ENCODE measurements at regions of chr20 and their contacts with region 1.

Region 1: DNA sequence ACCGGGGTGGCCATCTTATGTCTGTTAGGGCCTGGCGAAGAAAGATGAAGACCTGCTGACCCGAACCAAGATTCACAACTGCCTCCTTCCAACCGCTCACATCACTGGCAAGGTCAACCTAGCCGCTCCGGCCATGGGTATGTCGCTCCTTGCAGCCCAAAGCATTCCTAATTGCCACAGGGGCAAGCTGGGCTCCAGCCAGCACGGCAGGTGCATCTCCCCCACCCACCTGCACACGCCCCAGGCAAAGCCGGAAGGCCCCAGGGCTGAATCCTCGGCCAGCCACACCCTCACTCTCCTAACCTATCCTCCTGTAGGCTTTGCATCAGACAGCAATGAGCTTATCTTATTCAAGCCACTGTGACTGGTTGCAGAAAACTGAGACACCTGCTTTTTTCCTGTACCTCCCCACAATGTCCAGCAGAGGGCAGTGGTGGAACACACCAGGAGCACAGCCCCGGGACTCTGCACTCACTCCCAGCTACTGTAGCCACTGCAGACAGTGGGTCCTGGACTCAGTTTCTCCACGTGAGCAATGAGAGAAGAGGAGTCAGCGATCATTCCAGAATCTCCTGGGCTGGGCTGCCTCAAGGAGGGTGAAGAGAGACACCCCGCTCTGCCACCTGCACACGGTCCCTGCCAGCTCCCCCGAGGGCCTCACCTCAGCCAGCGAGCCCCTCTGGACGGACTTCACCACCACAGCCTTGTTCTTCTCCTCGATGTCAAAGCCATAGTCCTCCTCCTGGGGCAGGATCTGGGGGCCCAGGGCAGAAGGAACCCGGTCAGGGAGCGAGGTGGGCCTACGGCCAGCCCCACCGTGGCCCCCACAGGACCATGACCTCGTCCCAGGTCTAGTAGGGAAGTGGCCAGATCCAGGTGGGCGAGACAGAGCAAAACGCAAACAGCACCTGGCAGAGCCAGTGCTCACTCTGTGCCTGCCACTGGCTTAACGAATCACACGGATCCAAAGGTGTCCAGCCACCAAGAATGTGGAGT is 170.0 kb downstream of the PREX1 start:
- DNase-seq: peak; percentile 93
- ATAC-seq: peak; percentile 78
- H3K4me3 ChIP-seq: no peak overlapping the region
- H3K27ac ChIP-seq: no peak overlapping the region
- H3K4me1 ChIP-seq: no peaks in the 10 kb centered on the region
- H3K27me3 ChIP-seq: no peaks in the 10 kb centered on the region
- CTCF ChIP-seq: peak; percentile 99

Region 2: GRCh38 chr20:48706173-48707015 is 48.6 kb after region 1 on chr20:
- CTCF ChIA-PET with region 1: no interaction called
- POLR2A ChIA-PET with region 1: no interaction called
- intact Hi-C with region 1: no loop called
- DNase-seq: no peak
- ATAC-seq: no peak
- H3K4me3 ChIP-seq: no peak overlapping the region
- H3K27ac ChIP-seq: no peak overlapping the region
- H3K4me1 ChIP-seq: no peaks in the 10 kb centered on the region
- H3K27me3 ChIP-seq: no peaks in the 10 kb centered on the region
- CTCF ChIP-seq: no peak

Region 3: GRCh38 chr20:48791015-48791514 is 133.3 kb after region 1 on chr20:
- CTCF ChIA-PET with region 1: interaction called, 11 read pairs
- POLR2A ChIA-PET with region 1: no interaction called
- intact Hi-C with region 1: loop called (anchors 10 kb)
- DNase-seq: peak; percentile 53
- ATAC-seq: peak; percentile 85
- H3K4me3 ChIP-seq: no peak overlapping the region
- H3K27ac ChIP-seq: no peak overlapping the region
- H3K4me1 ChIP-seq: peaks cover 17% of the 10 kb centered on the region
- H3K27me3 ChIP-seq: no peaks in the 10 kb centered on the region
- CTCF ChIP-seq: no peak

Region 4: GRCh38 chr20:48821261-48821900 is 163.6 kb after region 1 on chr20:
- CTCF ChIA-PET with region 1: no interaction called
- POLR2A ChIA-PET with region 1: no interaction called
- intact Hi-C with region 1: loop called (anchors 2 kb)
- DNase-seq: peak; percentile 41
- ATAC-seq: peak; percentile 46
- H3K4me3 ChIP-seq: no peak overlapping the region
- H3K27ac ChIP-seq: no peak overlapping the region
- H3K4me1 ChIP-seq: peaks cover 44% of the 10 kb centered on the region
- H3K27me3 ChIP-seq: no peaks in the 10 kb centered on the region
- CTCF ChIP-seq: no peak